Left cardiac atrium (tissue), 4 donors: ENCODE measurements at regions of chr7 and their contacts with region 1.

Region 1: GRCh38 chr7:65307651-65308299 is 65.9 kb upstream of the ZNF92 start:
- DNase-seq: peak; percentile 36
- ATAC-seq: peak; percentile 56 to 80

Region 2: DNA sequence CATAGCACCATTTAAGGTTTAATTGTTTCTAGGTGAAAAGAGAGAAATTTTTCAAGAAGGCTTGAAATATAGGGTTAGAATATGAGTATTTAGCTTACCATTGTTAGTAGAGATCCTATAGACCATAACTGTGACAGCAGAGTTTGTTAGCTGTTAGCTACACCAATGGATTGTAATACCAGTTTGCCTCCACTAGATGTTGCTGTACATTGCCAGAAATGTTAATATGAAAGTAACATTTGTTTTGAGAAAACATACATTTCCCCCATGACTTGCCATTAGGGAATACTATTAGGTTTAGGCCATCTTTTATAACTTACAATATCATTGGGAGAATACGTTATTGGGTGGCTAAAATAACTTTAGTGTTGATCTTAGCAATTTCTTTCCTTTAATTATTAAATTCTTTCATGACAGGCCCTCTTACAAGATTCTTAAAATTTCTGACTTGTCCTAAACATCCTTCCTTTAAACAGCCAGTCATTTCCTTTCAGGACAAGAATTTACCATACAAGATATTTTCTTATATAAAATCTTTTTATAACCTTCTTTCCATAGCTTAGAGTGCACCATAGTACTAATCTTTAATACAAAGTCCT is 356.4 kb before region 1 on chr7:
- intact Hi-C with region 1: loop called (anchors 2 to 5 kb)
- DNase-seq: no peak
- ATAC-seq: peak; percentile 30 to 31

Region 3: DNA sequence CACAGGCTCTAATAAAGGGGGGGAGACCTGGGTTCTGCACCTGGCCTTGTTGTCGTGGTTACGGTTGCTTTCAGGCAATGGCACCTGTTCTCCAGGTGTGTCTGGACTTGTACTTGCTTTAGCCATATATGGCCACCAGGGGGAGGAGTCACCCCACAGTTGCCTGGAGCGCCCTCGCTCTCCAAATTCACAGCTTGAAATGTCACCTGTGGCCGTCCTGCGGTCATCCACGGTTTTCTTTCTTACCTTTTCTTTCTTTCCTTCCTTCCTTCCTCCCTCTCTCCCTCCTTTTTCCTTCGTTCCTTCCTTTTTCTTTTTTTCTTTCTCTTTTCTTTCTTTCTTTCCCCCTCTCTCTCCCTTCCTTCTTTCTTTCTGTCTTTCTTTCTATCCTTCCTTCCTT is 91.3 kb before region 1 on chr7:
- intact Hi-C with region 1: loop called in 1 of 2 experiments (anchors 5 kb)
- DNase-seq: peak; percentile 31
- ATAC-seq: peak in 1 of 2 donors; percentile 47